Gastrocnemius medialis (tissue), 4 donors: ENCODE measurements at regions of chr7 and their contacts with region 1.

Region 1: DNA sequence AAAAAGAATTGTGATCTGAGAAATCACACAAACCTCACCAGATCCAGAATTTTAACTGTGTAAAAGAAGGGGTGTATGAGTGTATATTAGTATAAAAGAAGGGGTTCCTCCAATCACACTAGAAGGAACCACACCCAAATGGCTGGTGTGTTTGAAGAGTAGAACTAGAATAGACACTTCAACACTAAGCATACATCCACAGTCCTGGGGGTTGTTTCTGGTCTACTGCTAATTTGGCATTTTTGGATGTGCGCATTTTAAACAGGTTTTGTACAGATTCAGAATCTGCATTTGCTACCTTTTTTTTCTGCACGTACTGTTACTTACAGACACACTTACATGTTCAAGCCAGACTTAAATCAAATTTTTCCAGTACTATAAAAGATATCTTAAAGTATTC is 64.6 kb downstream of the PDE1C start:
- DNase-seq: no peak
- ATAC-seq: no peak
- H3K4me3 ChIP-seq: no peak overlapping the region
- H3K27ac ChIP-seq: no peak overlapping the region
- H3K4me1 ChIP-seq: no peaks in the 10 kb centered on the region
- H3K27me3 ChIP-seq: no peaks in the 10 kb centered on the region
- CTCF ChIP-seq: no peak
- POLR2A ChIP-seq: no peak

Region 2: DNA sequence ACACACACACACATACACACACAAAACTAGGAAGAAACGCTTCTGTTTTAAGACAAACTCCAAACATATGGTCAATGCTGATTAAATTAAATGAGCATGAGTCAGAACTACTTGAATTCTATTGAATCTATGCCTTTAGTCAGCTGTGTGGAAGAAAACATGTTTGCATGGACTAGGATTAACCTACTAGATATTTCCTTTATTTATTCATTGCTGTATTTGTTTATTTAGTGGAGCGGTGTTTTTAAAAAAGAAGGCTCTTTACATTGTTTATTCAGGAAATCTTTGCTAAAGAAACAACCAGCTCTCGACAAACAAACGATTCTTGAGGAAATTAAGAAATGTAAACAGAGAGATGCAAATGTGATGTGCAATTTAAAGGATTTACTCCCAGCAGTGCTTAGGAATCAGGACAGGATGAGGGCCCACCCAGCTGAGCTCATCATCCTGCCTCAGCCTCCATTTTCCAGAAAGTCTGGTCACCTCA is 18.6 kb before region 1 on chr7:
- in situ Hi-C with region 1: no loop called
- intact Hi-C with region 1: loop called (anchors 2 kb)
- DNase-seq: no peak
- ATAC-seq: no peak
- H3K4me3 ChIP-seq: no peak overlapping the region
- H3K27ac ChIP-seq: no peak overlapping the region
- H3K4me1 ChIP-seq: no peaks in the 10 kb centered on the region
- H3K27me3 ChIP-seq: no peaks in the 10 kb centered on the region
- CTCF ChIP-seq: no peak
- POLR2A ChIP-seq: no peak